ENCODE measurements at regions of chr17 and their contacts with region 1.

Region 1: GRCh38 chr17:64736804-64737492 is 74.8 kb upstream of the SMURF2 start:
- DNase-seq: peak in 34 of 35 experiments; percentile 6 to 65 (median 37)
- ATAC-seq: peak; percentile 57 to 85 (median 78)
- H3K4me3 ChIP-seq: no peak overlapping the region
- H3K4me3 Mint-ChIP-seq: no peak overlapping the region
- H3K27ac ChIP-seq: no peak overlapping the region
- H3K27ac Mint-ChIP-seq: no peak overlapping the region
- H3K4me1 ChIP-seq: peaks cover 0 to 6% of the 10 kb centered on the region in 2 experiments
- H3K4me1 Mint-ChIP-seq: peaks cover 5 to 26% (median 15%) of the 10 kb centered on the region in 3 donors
- H3K27me3 ChIP-seq: no peaks in the 10 kb centered on the region
- H3K27me3 Mint-ChIP-seq: no peaks in the 10 kb centered on the region

Region 2: GRCh38 chr17:64306850-64307463 is 430.0 kb before region 1 on chr17:
- CTCF ChIA-PET with region 1: interaction called in 1 of 2 experiments, 13 read pairs
- POLR2A ChIA-PET with region 1: no interaction called
- DNase-seq: peak; percentile 32 to 86 (median 60)
- ATAC-seq: peak in 3 of 4 experiments; percentile 51 to 69 (median 55)
- H3K4me3 ChIP-seq: no peak overlapping the region
- H3K4me3 Mint-ChIP-seq: no peak overlapping the region
- H3K27ac ChIP-seq: no peak overlapping the region
- H3K27ac Mint-ChIP-seq: no peak overlapping the region
- H3K4me1 ChIP-seq: no peaks in the 10 kb centered on the region
- H3K4me1 Mint-ChIP-seq: peaks cover 0 to 2% (median 0%) of the 10 kb centered on the region in 3 donors
- H3K27me3 ChIP-seq: peaks cover 0 to 3% of the 10 kb centered on the region in 2 experiments
- H3K27me3 Mint-ChIP-seq: no peaks in the 10 kb centered on the region

Region 3: DNA sequence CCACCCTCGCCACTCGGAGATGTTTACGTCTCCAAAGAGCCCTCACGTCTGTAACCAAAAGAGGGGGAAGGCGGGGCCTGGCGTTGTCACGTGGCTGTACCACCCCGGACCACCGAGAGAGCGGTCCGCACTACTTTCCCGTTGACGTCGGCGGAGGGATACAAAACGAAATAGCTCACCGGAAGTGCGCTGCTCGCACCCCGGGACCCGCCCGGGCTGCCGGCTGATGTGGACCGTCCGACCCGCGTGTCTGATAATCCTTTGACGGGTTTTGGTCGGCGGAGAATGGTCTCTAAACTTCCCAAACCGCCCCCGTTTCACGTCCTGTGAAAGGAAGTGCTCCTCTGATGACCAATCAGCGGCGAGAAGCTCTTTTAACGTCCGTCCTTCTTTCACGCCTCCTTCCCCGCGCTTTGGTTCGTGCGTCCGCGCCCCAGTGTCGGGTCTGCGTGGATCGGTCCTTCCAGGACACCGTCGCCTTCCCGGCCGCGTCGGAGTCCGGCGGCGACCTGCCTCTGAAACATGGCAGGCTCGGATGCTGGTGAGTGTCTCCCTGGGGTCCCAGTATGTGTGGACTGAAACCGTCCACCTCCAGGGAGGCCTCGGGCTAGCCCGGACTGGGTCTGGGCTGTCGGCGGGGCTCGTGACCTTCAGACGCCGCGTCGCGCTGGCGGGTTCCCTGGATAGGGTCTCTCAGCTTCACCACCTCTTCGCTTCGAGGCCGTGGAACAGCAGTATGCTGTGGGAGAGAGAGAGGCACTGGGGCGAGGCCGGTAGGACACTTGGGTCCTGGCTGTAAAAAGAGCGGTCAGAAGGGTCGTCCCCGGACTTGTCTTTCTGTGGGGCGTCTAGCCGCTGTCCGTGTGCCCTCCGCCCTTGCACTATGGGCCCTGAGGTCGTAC is 230.1 kb before region 1 on chr17 and contains the start of gene CEP95:
- CTCF ChIA-PET with region 1: interaction called in 1 of 2 experiments, 5 read pairs
- POLR2A ChIA-PET with region 1: interaction called in 1 of 2 experiments, 12 read pairs
- DNase-seq: peak in 34 of 35 experiments; percentile 90 to 98 (median 95)
- ATAC-seq: peak; percentile 63 to 76 (median 69)
- H3K4me3 ChIP-seq: peak within 1 kb of the TSS; percentile 91 to 99
- H3K4me3 Mint-ChIP-seq: peak within 1 kb of the TSS; percentile 97 to 100 (median 100)
- H3K27ac ChIP-seq: peak within 1 kb of the TSS; percentile 99
- H3K27ac Mint-ChIP-seq: peak within 1 kb of the TSS; percentile 99 to 100
- H3K4me1 ChIP-seq: peaks cover 19 to 34% of the 10 kb centered on the region in 2 experiments
- H3K4me1 Mint-ChIP-seq: peaks cover 62 to 72% (median 62%) of the 10 kb centered on the region in 3 donors
- H3K27me3 ChIP-seq: no peaks in the 10 kb centered on the region
- H3K27me3 Mint-ChIP-seq: no peaks in the 10 kb centered on the region
- total RNA-seq, gene CEP95: 77.0 to 168 (median 91.9) TPM

Region 4: GRCh38 chr17:64599827-64600226 is 137.1 kb before region 1 on chr17:
- CTCF ChIA-PET with region 1: interaction called in 1 of 2 experiments, 17 read pairs
- POLR2A ChIA-PET with region 1: no interaction called
- DNase-seq: no peak
- ATAC-seq: peak in 1 of 4 experiments; percentile 18
- H3K4me3 ChIP-seq: no peak overlapping the region
- H3K4me3 Mint-ChIP-seq: peak overlapping the region; percentile 51 to 58 (median 58)
- H3K27ac ChIP-seq: peak overlapping the region; percentile 71
- H3K27ac Mint-ChIP-seq: peak overlapping the region; percentile 77 to 89
- H3K4me1 ChIP-seq: peaks cover 6 to 9% of the 10 kb centered on the region in 2 experiments
- H3K4me1 Mint-ChIP-seq: peaks cover 39 to 50% (median 45%) of the 10 kb centered on the region in 3 donors
- H3K27me3 ChIP-seq: no peaks in the 10 kb centered on the region
- H3K27me3 Mint-ChIP-seq: no peaks in the 10 kb centered on the region

Measured in T-cell (primary cell).